ENCODE measurements at regions of chr7 and their contacts with region 1.

Region 1: GRCh38 chr7:116776610-116777289 is 85.6 kb upstream of the CAPZA2 start:
- DNase-seq: peak; percentile 67
- H3K4me3 Mint-ChIP-seq: peak overlapping the region; percentile 20
- H3K27ac Mint-ChIP-seq: peak overlapping the region; percentile 92
- H3K4me1 Mint-ChIP-seq: peaks cover 89% of the 10 kb centered on the region
- H3K27me3 Mint-ChIP-seq: no peaks in the 10 kb centered on the region
- CTCF ChIP-seq: no peak

Region 2: DNA sequence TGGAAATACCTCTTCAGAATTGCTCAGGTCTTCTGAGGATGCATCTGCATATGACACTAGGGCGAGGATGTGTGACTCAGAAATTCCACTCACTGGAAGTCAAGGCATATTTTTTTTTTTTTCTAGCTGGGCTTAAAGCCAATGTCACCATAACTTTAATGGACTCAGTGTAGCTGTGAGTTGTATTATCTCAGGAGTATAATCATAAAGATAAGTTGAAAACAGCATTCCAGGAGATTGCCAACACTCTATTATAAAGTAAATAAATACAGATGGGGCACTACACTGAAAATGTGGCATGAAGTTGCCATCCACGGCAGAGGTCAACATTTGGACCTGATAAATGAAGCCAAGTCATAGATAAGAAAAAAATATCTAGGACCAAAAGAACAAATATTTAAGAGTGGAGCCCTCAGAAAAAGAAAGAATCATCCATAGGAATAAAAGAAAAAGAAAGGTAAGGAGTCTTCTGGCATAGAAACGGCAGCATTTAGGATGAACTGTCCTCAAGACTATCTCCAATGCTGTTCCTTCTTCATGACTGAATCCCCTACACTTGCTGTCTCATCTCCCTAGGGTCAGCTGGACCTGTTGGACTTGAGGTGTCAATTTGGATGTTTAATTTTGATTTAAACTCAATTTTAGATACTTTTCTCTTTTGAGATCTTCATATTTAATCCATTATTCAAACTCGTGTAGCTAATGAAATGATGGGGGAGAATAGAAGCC is 350.2 kb before region 1 on chr7:
- CTCF ChIA-PET with region 1: no interaction called
- intact Hi-C with region 1: no loop called
- DNase-seq: peak; percentile 32
- H3K4me3 Mint-ChIP-seq: no peak overlapping the region
- H3K27ac Mint-ChIP-seq: peak overlapping the region; percentile 73
- H3K4me1 Mint-ChIP-seq: peaks cover 44% of the 10 kb centered on the region
- H3K27me3 Mint-ChIP-seq: no peaks in the 10 kb centered on the region
- CTCF ChIP-seq: no peak

Region 3: DNA sequence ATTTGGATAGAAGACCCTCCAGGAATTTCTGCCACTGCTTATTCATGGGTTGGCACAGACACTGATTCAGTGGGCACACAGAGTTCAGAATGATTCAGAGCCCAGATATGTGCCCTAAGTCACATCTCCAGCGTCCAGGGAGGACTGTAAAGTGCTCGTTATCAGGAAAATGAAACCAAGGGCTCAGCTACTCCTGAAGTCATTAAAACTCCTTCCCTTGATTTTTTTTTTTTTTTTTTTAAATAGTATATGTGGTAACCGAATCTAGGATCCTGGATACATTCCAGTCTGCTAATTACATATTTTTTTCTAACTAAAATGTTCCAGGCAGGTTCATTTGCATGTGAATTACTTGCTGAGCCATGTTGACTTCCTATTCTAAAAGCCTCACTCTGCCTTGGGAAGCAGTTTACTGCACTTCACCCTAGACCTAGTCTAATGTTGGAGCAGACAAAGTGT is 70.1 kb before region 1 on chr7:
- CTCF ChIA-PET with region 1: no interaction called
- intact Hi-C with region 1: loop called (anchors 5 kb)
- DNase-seq: peak; percentile 45
- H3K4me3 Mint-ChIP-seq: peak overlapping the region; percentile 55
- H3K27ac Mint-ChIP-seq: peak overlapping the region; percentile 82
- H3K4me1 Mint-ChIP-seq: peaks cover 82% of the 10 kb centered on the region
- H3K27me3 Mint-ChIP-seq: no peaks in the 10 kb centered on the region
- CTCF ChIP-seq: no peak

Region 4: GRCh38 chr7:116802746-116803152 is 26.0 kb after region 1 on chr7:
- CTCF ChIA-PET with region 1: interaction called, 3 read pairs
- intact Hi-C with region 1: loop called (anchors 2 kb)
- DNase-seq: peak; percentile 48
- H3K4me3 Mint-ChIP-seq: peak overlapping the region; percentile 16
- H3K27ac Mint-ChIP-seq: peak overlapping the region; percentile 84
- H3K4me1 Mint-ChIP-seq: peaks cover 60% of the 10 kb centered on the region
- H3K27me3 Mint-ChIP-seq: no peaks in the 10 kb centered on the region
- CTCF ChIP-seq: no peak

Measured in Calu3 (cell line).